Activated CD4-positive, alpha-beta T cell treated with anti-CD3 and anti-CD28 coated beads, Interleukin-2, amount 10 ng/mL, durations not matched to agents 24 days and 14 days (primary cell): ENCODE measurements at regions of chr10 and their contacts with region 1.

Region 1: DNA sequence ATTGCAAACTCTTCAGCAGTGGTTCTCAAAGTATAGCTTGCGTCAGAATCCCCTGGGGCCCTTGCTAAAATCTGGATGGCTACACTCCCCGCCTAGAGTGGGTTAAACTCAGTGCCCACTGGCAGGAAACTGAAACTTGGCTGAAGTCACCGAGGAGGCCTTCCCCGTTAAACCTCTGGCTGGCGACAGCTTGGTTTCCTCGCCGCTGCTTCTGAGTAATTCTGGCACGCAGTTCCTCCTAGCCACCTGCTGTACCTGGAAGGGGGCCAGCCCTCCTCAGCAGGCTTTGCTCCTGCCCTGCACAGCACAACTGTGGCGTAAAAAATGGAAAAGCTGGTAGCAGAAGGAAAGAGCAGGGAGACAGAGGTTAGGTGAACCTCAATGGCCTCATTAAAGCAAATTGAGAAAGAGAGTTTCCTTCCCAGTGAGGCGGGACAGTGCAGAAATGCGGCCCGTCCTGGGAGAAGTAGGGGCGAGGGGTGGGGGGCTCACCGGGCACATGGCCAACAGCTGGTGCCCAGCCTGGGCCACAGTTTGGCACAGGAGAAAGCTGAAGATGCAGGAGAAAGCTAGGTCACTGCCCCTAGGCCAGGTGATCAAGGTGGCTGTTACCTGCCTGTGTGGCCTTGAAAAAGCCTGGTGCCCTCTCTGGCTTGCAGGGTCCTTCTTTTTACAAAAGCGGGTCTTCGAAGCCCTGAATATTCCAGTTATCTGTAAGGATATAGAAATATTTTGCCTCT is 46.6 kb downstream of the ALOX5 start:
- DNase-seq: peak; percentile 89
- H3K4me3 Mint-ChIP-seq: peak overlapping the region; percentile 98
- H3K27ac Mint-ChIP-seq: peak overlapping the region; percentile 99
- H3K4me1 Mint-ChIP-seq: peaks cover 73% of the 10 kb centered on the region
- H3K27me3 Mint-ChIP-seq: no peaks in the 10 kb centered on the region

Region 2: GRCh38 chr10:45373576-45374349 is 46.9 kb before region 1 on chr10 and contains the start of gene ALOX5:
- intact Hi-C with region 1: loop called (anchors 5 kb)
- DNase-seq: peak; percentile 88
- H3K4me3 Mint-ChIP-seq: peak within 1 kb of the TSS; percentile 93
- H3K27ac Mint-ChIP-seq: peak within 1 kb of the TSS; percentile 79
- H3K4me1 Mint-ChIP-seq: peaks cover 28% of the 10 kb centered on the region
- H3K27me3 Mint-ChIP-seq: peaks cover 65% of the 10 kb centered on the region
- total RNA-seq, gene ALOX5: 1.0 and 2.4 TPM in 2 replicates